ENCODE measurements at regions of chr10 and their contacts with region 1.

Region 1: GRCh38 chr10:127190427-127190826 is 6.0 kb downstream of the INSYN2A start:
- DNase-seq: no peak
- ATAC-seq: no peak
- H3K4me3 ChIP-seq: no peak overlapping the region
- H3K27ac ChIP-seq: no peak overlapping the region
- H3K4me1 ChIP-seq: no peaks in the 10 kb centered on the region
- H3K27me3 ChIP-seq: peaks cover 0 to 2% (median 0%) of the 10 kb centered on the region in 3 donors
- CTCF ChIP-seq: no peak
- POLR2A ChIP-seq: no peak

Region 2: GRCh38 chr10:127151981-127152699 is 38.3 kb before region 1 on chr10:
- in situ Hi-C with region 1: no loop called
- intact Hi-C with region 1: loop called (anchors 1 kb)
- DNase-seq: no peak
- ATAC-seq: no peak
- H3K4me3 ChIP-seq: no peak overlapping the region
- H3K27ac ChIP-seq: no peak overlapping the region
- H3K4me1 ChIP-seq: no peaks in the 10 kb centered on the region
- H3K27me3 ChIP-seq: no peaks in the 10 kb centered on the region
- CTCF ChIP-seq: no peak
- POLR2A ChIP-seq: no peak

Measured in gastrocnemius medialis (tissue), 4 donors.